HepG2 (cell line): ENCODE measurements at regions of chr1 and their contacts with region 1.

Region 1: DNA sequence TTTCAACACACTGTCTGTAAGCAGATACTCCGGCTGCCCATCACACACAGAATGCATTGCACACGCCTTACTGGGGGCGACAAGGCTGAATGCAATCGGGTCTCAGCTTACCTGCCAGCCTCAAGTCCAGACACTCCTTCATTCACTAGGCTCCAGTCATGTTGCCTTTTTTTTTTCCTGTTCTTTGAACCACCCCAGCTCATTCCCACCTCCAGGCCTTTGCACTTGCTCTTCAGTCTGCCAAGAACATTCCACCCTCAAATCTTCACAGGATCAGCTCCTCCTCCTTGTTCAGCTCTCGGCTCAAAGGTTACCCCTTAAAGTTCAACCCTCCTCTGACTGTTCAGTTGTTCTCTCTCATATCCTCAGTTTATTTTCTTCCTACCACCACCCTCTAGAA is 181.9 kb upstream of the ESRRG start:
- DNase-seq: no peak
- ATAC-seq: no peak
- H3K4me3 ChIP-seq: no peak overlapping the region
- H3K27ac ChIP-seq: no peak overlapping the region
- H3K4me1 ChIP-seq: peaks cover 34% of the 10 kb centered on the region
- H3K27me3 ChIP-seq: no peaks in the 10 kb centered on the region
- CTCF ChIP-seq: no peak
- EP300 ChIP-seq: no peak
- POLR2A ChIP-seq: no peak
- RAD21 ChIP-seq: no peak

Region 2: GRCh38 chr1:216562383-216562782 is 342.8 kb before region 1 on chr1:
- CTCF ChIA-PET with region 1: no interaction called
- POLR2A ChIA-PET with region 1: no interaction called
- in situ Hi-C with region 1: no loop called
- intact Hi-C with region 1: no loop called
- DNase-seq: no peak
- ATAC-seq: no peak
- H3K4me3 ChIP-seq: no peak overlapping the region
- H3K27ac ChIP-seq: no peak overlapping the region
- H3K4me1 ChIP-seq: no peaks in the 10 kb centered on the region
- H3K27me3 ChIP-seq: no peaks in the 10 kb centered on the region
- CTCF ChIP-seq: no peak
- EP300 ChIP-seq: no peak
- POLR2A ChIP-seq: no peak
- RAD21 ChIP-seq: no peak

Region 3: GRCh38 chr1:218878369-218878768 is 1973.2 kb after region 1 on chr1:
- CTCF ChIA-PET with region 1: no interaction called
- POLR2A ChIA-PET with region 1: no interaction called
- in situ Hi-C with region 1: no loop called
- intact Hi-C with region 1: loop called (anchors 5 kb)
- DNase-seq: no peak
- ATAC-seq: no peak
- H3K4me3 ChIP-seq: no peak overlapping the region
- H3K27ac ChIP-seq: no peak overlapping the region
- H3K4me1 ChIP-seq: no peaks in the 10 kb centered on the region
- H3K27me3 ChIP-seq: no peaks in the 10 kb centered on the region; a peak in 1 of 5 replicates
- CTCF ChIP-seq: no peak
- EP300 ChIP-seq: no peak
- POLR2A ChIP-seq: no peak
- RAD21 ChIP-seq: no peak